ENCODE measurements at regions of chr4 and their contacts with region 1.

Region 1: GRCh38 chr4:83074086-83074704 is 39.2 kb downstream of the COPS4 start:
- DNase-seq: peak; percentile 91 to 95 (median 95)
- H3K4me3 ChIP-seq: no peak overlapping the region
- H3K27ac ChIP-seq: no peak overlapping the region
- H3K4me1 ChIP-seq: peaks cover 3 to 15% (median 12%) of the 10 kb centered on the region in 4 experiments
- H3K27me3 ChIP-seq: no peaks in the 10 kb centered on the region

Region 2: DNA sequence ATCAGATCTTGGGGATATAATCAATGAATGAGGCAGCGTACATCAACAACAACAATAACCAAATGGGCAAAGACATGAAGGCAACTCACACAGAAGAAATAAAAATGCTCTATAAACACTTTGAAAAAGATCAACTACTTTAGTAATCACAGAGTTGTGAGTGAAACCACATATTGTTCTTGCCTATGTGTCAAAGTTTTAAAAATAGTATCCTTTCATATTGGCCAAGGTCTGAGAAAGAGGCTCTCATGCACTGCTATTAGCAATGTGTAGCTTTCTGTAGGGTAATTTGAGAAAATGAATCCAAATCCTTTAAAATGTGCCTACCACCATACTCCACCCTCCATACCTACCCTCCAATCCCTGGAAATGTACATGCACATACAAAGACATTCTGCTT is 185.4 kb after region 1 on chr4:
- CTCF ChIA-PET with region 1: interaction called, 14 read pairs
- POLR2A ChIA-PET with region 1: no interaction called
- DNase-seq: no peak
- H3K4me3 ChIP-seq: no peak overlapping the region
- H3K27ac ChIP-seq: no peak overlapping the region
- H3K4me1 ChIP-seq: peaks cover 0 to 6% (median 4%) of the 10 kb centered on the region in 4 experiments
- H3K27me3 ChIP-seq: no peaks in the 10 kb centered on the region